ENCODE measurements at regions of chr2 and their contacts with region 1.

Region 1: GRCh38 chr2:127857265-127857808 is 618 bp downstream of the POLR2D start:
- DNase-seq: peak in 1 of 2 donors; percentile 33
- H3K4me3 ChIP-seq: peak overlapping the region; percentile 79 to 98
- H3K27ac ChIP-seq: peak overlapping the region; percentile 80 to 88
- H3K4me1 ChIP-seq: peaks cover 3 to 36% (median 25%) of the 10 kb centered on the region in 4 donors
- H3K27me3 ChIP-seq: no peaks in the 10 kb centered on the region
- CTCF ChIP-seq: no peak

Region 2: DNA sequence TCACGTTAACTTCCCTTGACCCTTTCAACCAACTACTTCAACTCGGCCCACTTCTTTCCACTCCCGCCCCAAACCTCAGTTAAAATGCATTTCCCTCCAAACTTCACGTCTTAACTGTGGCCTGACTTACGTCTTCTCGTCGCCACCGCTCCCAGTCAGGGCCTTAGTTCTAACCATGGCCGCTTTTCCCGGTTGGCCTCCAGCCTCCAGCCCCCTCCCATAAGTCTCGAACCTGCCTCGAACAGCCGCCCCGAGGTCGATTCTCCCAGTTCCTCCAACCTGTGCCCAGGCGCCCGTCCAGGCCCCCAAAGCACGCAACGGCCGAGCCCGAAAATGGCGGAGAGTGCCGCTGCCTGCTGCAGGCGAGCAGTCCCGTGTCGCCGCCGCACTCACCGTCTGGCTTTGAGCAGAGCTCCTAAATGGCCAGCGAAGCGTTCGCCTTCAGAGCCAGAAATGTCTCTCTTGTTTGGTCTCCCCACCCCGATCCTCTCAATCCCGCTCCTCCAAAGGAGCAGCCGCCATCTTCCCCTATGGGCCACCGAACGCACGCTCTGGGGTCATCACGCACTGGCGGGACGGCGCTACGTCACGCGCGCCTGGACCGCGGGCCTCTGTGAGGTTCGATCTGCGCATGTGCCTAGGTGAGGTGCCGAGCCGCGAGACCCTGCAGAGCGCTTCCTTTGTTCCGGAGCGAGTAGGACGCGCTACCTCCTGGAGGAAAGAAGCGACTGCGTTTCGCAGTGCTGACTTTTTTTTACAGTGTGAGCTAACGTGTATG is 46.5 kb before region 1 on chr2 and contains the start of gene WDR33:
- intact Hi-C with region 1: loop called (anchors 5 kb)
- DNase-seq: peak; percentile 77 to 90
- H3K4me3 ChIP-seq: peak within 1 kb of the TSS; percentile 73 to 91
- H3K27ac ChIP-seq: peak within 1 kb of the TSS; percentile 85 to 92
- H3K4me1 ChIP-seq: peaks cover 0 to 41% (median 19%) of the 10 kb centered on the region in 4 donors
- H3K27me3 ChIP-seq: no peaks in the 10 kb centered on the region
- CTCF ChIP-seq: peak in 1 of 2 experiments; percentile 27